Activated T-helper 2 cell treated with anti-CD3 and anti-CD28 coated beads, Interferon-gamma antibody, Interleukin-2, Interleukin-4, amounts not matched to agents 10 μg/mL and 5 μg/mL and 100 μg/mL, durations not matched to agents 14 hours and 24 hours and 36 hours (primary cell): ENCODE measurements at regions of chr16 and their contacts with region 1.

Region 1: GRCh38 chr16:46929378-46930332 is 43.8 kb downstream of the DNAJA2 start:
- DNase-seq: peak; percentile 46
- H3K4me3 Mint-ChIP-seq: no peak overlapping the region
- H3K27ac Mint-ChIP-seq: no peak overlapping the region
- H3K4me1 Mint-ChIP-seq: no peaks in the 10 kb centered on the region
- H3K27me3 Mint-ChIP-seq: no peaks in the 10 kb centered on the region

Region 2: DNA sequence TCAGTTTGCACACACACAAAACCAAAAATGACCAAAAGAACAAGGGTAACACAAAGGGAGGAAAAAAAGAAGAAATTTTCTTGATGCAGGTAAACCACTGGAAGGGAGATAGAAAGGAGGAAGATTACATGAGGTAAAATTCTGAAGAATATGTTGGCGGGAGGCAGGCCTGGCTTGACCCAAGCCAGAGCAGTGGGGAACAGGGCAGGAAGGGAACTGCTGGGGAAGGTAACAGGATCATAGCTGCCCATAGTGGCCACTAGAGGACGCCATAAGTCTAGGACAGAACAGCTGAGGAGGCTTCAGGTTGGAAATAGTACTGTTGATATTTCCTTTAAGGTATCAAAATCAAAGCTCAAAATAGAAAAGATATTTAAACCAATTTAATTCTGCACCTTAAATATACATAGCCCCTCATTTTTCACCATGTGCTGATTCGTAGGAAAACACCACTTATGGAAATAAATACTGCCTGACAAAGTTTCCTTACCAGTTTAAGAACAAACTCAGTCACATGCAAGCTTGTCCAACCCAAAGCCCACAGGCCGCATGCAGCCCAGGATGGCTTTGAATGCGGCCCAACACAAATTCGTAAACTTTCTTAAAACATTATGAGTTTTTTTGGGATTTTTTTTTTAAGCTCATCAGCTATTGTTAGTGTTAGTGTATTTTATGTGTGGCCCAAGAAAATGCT is 256.2 kb before region 1 on chr16:
- intact Hi-C with region 1: loop called (anchors 5 kb)
- DNase-seq: peak; percentile 25
- H3K4me3 Mint-ChIP-seq: no peak overlapping the region
- H3K27ac Mint-ChIP-seq: no peak overlapping the region
- H3K4me1 Mint-ChIP-seq: no peaks in the 10 kb centered on the region
- H3K27me3 Mint-ChIP-seq: no peaks in the 10 kb centered on the region

Region 3: GRCh38 chr16:46743238-46743719 is 186.4 kb before region 1 on chr16:
- intact Hi-C with region 1: no loop called
- DNase-seq: no peak
- H3K4me3 Mint-ChIP-seq: no peak overlapping the region
- H3K27ac Mint-ChIP-seq: no peak overlapping the region
- H3K4me1 Mint-ChIP-seq: peaks cover 4% of the 10 kb centered on the region
- H3K27me3 Mint-ChIP-seq: no peaks in the 10 kb centered on the region

Region 4: GRCh38 chr16:46853713-46854443 is 75.8 kb before region 1 on chr16:
- intact Hi-C with region 1: loop called (anchors 2 kb)
- DNase-seq: peak; percentile 46
- H3K4me3 Mint-ChIP-seq: no peak overlapping the region
- H3K27ac Mint-ChIP-seq: no peak overlapping the region
- H3K4me1 Mint-ChIP-seq: peaks cover 2% of the 10 kb centered on the region
- H3K27me3 Mint-ChIP-seq: peaks cover 2% of the 10 kb centered on the region

Region 5: DNA sequence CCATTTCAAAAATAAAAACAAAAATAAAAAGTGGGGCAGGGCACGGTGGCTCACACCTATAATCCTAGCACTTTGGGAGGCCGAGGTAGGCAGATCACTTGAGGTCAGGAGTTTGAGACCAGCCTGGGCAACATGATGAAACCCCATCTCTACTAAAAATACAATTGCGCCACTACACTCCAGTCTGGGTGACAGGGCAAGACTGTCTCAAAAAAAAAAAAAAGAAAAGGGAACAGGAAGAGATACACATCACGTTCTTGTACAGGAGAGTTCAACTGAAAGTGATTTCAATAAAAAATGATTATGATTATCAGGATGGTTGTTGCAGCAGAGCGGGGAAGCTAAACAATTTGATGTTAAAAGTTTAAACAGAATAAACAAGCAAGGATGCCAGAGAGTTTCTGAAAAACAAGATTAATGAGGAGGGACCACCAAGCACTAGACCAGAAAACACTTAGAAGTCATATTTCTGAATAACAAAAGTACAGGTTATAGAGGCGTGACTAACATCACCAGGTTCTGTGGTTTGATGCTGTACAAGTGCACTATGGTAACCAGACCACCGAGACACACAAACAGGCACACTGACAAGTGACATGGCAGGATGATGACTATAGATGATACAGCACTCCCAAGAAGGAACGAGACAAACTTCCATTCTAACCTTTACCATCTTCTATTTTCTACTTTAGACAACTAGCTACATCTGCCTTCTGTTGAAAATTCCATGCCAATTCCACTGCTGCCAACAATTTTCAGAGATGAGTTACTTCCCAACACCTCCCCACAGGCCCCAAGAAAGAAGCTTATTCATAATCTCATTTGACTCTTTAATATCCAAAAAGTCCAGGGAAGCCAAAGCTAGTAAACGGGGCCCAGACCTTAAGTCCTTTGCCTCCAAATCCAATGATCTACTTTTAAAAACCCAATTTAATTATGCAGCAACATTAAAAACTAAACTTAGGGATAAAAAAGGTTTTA is 32.0 kb after region 1 on chr16:
- intact Hi-C with region 1: no loop called
- DNase-seq: no peak
- H3K4me3 Mint-ChIP-seq: no peak overlapping the region
- H3K27ac Mint-ChIP-seq: peak overlapping the region; percentile 57
- H3K4me1 Mint-ChIP-seq: peaks cover 14% of the 10 kb centered on the region
- H3K27me3 Mint-ChIP-seq: no peaks in the 10 kb centered on the region

Region 6: GRCh38 chr16:47204736-47205504 is 275.3 kb after region 1 on chr16:
- intact Hi-C with region 1: no loop called
- DNase-seq: no peak
- H3K4me3 Mint-ChIP-seq: no peak overlapping the region
- H3K27ac Mint-ChIP-seq: no peak overlapping the region
- H3K4me1 Mint-ChIP-seq: no peaks in the 10 kb centered on the region
- H3K27me3 Mint-ChIP-seq: no peaks in the 10 kb centered on the region